Mammary epithelial cell (primary cell): ENCODE measurements at regions of chr15 and their contacts with region 1.

Region 1: GRCh38 chr15:38769492-38769891 is 204.9 kb upstream of the RASGRP1 start:
- DNase-seq: no peak
- H3K4me3 ChIP-seq: no peak overlapping the region
- H3K27ac ChIP-seq: no peak overlapping the region
- H3K4me1 ChIP-seq: no peaks in the 10 kb centered on the region
- H3K27me3 ChIP-seq: no peaks in the 10 kb centered on the region
- CTCF ChIP-seq: no peak

Region 2: GRCh38 chr15:38745126-38745525 is 24.4 kb before region 1 on chr15:
- CTCF ChIA-PET with region 1: interaction called, 21 read pairs
- dilution Hi-C with region 1: no loop called
- in situ Hi-C with region 1: no loop called
- intact Hi-C with region 1: no loop called
- DNase-seq: no peak
- H3K4me3 ChIP-seq: no peak overlapping the region
- H3K27ac ChIP-seq: no peak overlapping the region
- H3K4me1 ChIP-seq: peaks cover 16% of the 10 kb centered on the region
- H3K27me3 ChIP-seq: no peaks in the 10 kb centered on the region
- CTCF ChIP-seq: no peak

Region 3: GRCh38 chr15:38828031-38828532 is 58.6 kb after region 1 on chr15:
- CTCF ChIA-PET with region 1: no interaction called
- dilution Hi-C with region 1: no loop called
- in situ Hi-C with region 1: no loop called
- intact Hi-C with region 1: no loop called
- DNase-seq: no peak
- H3K4me3 ChIP-seq: no peak overlapping the region
- H3K27ac ChIP-seq: no peak overlapping the region
- H3K4me1 ChIP-seq: no peaks in the 10 kb centered on the region
- H3K27me3 ChIP-seq: peaks cover 2% of the 10 kb centered on the region
- CTCF ChIP-seq: no peak